HCT116 (cell line): ENCODE measurements at regions of chr19 and their contacts with region 1.

Region 1: GRCh38 chr19:12965017-12965811 is 4.2 kb upstream of the DAND5 start:
- DNase-seq: peak; percentile 73
- ATAC-seq: peak; percentile 93
- H3K4me3 ChIP-seq: peak overlapping the region; percentile 35 to 52
- H3K27ac ChIP-seq: peak overlapping the region; percentile 54
- H3K4me1 ChIP-seq: peaks cover 3 to 18% of the 10 kb centered on the region in 2 experiments; a peak in 3 of 4 replicates
- H3K27me3 ChIP-seq: no peaks in the 10 kb centered on the region
- CTCF ChIP-seq: peak; percentile 72 to 98 (median 91)
- POLR2A ChIP-seq: peak; percentile 11
- RAD21 ChIP-seq: peak; percentile 77

Region 2: GRCh38 chr19:13060964-13061927 is 96.0 kb after region 1 on chr19:
- CTCF ChIA-PET with region 1: interaction called, 37 read pairs
- POLR2A ChIA-PET with region 1: interaction called, 3 read pairs
- RAD21 ChIA-PET with region 1: interaction called, 3 to 4 read pairs
- intact Hi-C with region 1: no loop called
- DNase-seq: peak; percentile 59
- ATAC-seq: peak; percentile 86
- H3K4me3 ChIP-seq: peak overlapping the region; percentile 51 to 66
- H3K27ac ChIP-seq: peak overlapping the region; percentile 78
- H3K4me1 ChIP-seq: peaks cover 41 to 56% of the 10 kb centered on the region in 2 experiments
- H3K27me3 ChIP-seq: no peaks in the 10 kb centered on the region
- CTCF ChIP-seq: peak; percentile 87 to 97 (median 92)
- POLR2A ChIP-seq: no peak
- RAD21 ChIP-seq: peak; percentile 99

Region 3: GRCh38 chr19:13093407-13094105 is 128.3 kb after region 1 on chr19:
- CTCF ChIA-PET with region 1: interaction called, 38 read pairs
- POLR2A ChIA-PET with region 1: no interaction called
- RAD21 ChIA-PET with region 1: interaction called, 7 to 9 read pairs
- intact Hi-C with region 1: no loop called
- DNase-seq: peak; percentile 70
- ATAC-seq: peak; percentile 80
- H3K4me3 ChIP-seq: no peak overlapping the region
- H3K27ac ChIP-seq: no peak overlapping the region; the same call in 1 of the 2 replicates
- H3K4me1 ChIP-seq: peaks cover 6 to 27% of the 10 kb centered on the region in 2 experiments; a peak in 3 of 4 replicates
- H3K27me3 ChIP-seq: no peaks in the 10 kb centered on the region
- CTCF ChIP-seq: peak; percentile 84 to 94 (median 92)
- POLR2A ChIP-seq: no peak
- RAD21 ChIP-seq: peak; percentile 99

Region 4: GRCh38 chr19:13255719-13256059 is 290.5 kb after region 1 on chr19:
- CTCF ChIA-PET with region 1: interaction called, 7 read pairs
- POLR2A ChIA-PET with region 1: no interaction called
- RAD21 ChIA-PET with region 1: interaction called in 1 of 2 experiments, 12 read pairs
- intact Hi-C with region 1: no loop called
- DNase-seq: no peak
- ATAC-seq: no peak
- H3K4me3 ChIP-seq: no peak overlapping the region
- H3K27ac ChIP-seq: no peak overlapping the region
- H3K4me1 ChIP-seq: peaks cover 8 to 22% of the 10 kb centered on the region in 2 experiments
- H3K27me3 ChIP-seq: no peaks in the 10 kb centered on the region
- CTCF ChIP-seq: no peak
- POLR2A ChIP-seq: no peak
- RAD21 ChIP-seq: no peak